B cell (primary cell): ENCODE measurements at regions of chr15 and their contacts with region 1.

Region 1: DNA sequence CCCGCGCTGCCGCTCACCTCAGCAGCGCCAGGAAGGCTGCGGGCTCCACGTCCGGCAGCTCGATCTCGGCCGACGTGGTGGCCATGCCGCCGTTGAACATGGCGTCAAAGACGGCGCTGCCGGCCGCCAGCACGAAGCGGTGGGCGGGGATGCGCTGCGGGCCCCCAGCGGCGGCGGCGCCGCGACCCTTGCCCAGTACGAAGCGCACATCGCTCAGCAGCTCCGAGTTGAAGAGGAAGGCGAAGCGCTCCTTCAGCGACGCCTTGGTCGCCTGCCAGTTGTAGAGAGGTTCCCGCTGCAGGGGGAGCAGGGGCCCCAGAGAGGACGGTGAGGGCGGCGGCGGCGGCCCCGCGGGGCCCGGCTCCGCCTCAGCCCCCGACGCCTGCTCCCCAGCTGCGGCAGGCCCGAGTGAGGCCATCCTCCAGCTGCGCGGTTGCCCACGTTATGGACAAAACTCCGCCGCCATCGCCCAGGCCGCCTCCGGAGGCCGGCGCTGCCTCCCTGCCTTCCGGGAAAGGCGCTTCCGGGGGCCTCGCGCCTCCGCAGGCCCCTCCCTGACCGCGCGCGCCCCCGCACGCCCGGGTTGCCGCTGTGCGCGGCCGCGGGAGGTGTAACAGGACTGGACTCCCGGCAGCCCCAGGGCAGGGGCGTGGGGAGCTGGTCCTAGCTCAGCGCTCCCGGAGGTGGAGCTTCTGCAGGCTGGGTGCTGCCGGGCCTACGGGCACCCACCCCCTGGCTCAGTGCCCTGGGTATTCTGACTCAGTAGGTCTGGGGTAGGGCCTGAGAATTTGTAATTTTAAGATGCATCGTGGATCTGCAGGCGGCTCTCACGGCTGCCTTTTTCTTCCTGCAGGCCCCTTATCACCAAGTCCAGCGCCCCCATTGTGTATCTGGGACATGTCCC is at the start of gene BTBD1:
- DNase-seq: peak; percentile 89
- ATAC-seq: peak; percentile 93
- H3K4me3 ChIP-seq: peak within 1 kb of the TSS; percentile 54 to 87 (median 83)
- H3K4me3 Mint-ChIP-seq: peak within 1 kb of the TSS; percentile 79
- H3K27ac ChIP-seq: peak within 1 kb of the TSS; percentile 31 to 84
- H3K27ac Mint-ChIP-seq: peak within 1 kb of the TSS; percentile 80
- H3K4me1 ChIP-seq: peaks cover 39 to 41% of the 10 kb centered on the region in 2 donors
- H3K4me1 Mint-ChIP-seq: peaks cover 10% of the 10 kb centered on the region
- H3K27me3 ChIP-seq: no peaks in the 10 kb centered on the region
- H3K27me3 Mint-ChIP-seq: no peaks in the 10 kb centered on the region
- CTCF ChIP-seq: no peak
- total RNA-seq, gene BTBD1: 47.5 and 54.6 TPM in 2 replicates

Region 2: DNA sequence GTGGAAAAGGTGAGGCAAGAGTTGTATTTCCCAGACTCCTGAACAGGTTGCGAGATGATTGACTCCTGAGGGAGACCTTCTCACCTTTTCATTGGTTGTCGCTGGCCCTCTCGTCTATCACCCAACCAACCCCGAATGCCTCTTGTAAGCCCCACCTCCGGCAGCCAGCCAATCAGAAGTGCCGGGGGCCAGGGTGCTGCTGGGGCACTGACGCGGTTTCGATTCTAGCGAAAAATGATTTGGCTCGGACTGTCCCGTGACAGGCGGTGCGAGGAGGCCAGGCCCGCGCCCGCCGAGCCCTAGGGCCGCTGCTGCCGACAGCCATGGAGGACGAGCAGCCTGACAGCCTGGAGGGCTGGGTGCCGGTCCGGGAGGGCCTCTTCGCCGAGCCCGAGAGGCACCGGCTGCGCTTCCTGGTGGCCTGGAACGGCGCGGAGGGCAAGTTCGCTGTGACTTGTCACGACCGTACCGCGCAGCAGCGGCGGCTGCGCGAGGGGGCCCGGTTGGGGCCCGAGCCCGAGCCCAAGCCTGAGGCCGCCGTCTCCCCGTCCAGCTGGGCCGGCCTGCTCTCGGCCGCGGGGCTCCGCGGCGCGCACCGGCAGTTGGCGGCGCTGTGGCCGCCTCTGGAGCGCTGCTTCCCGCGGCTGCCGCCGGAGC is 257.5 kb before region 1 on chr15 and contains the start of gene WHAMM:
- CTCF ChIA-PET with region 1: interaction called, 3 read pairs
- POLR2A ChIA-PET with region 1: no interaction called
- intact Hi-C with region 1: loop called (anchors 1 kb)
- DNase-seq: peak; percentile 97
- ATAC-seq: peak; percentile 89
- H3K4me3 ChIP-seq: peak within 1 kb of the TSS; percentile 82 to 96 (median 86)
- H3K4me3 Mint-ChIP-seq: peak within 1 kb of the TSS; percentile 86
- H3K27ac ChIP-seq: peak within 1 kb of the TSS; percentile 91 to 99
- H3K27ac Mint-ChIP-seq: peak within 1 kb of the TSS; percentile 95
- H3K4me1 ChIP-seq: peaks cover 31 to 41% of the 10 kb centered on the region in 2 donors
- H3K4me1 Mint-ChIP-seq: peaks cover 54% of the 10 kb centered on the region
- H3K27me3 ChIP-seq: no peaks in the 10 kb centered on the region
- H3K27me3 Mint-ChIP-seq: no peaks in the 10 kb centered on the region
- CTCF ChIP-seq: no peak
- total RNA-seq, gene WHAMM: 29.9 and 31.3 TPM in 2 replicates

Region 3: DNA sequence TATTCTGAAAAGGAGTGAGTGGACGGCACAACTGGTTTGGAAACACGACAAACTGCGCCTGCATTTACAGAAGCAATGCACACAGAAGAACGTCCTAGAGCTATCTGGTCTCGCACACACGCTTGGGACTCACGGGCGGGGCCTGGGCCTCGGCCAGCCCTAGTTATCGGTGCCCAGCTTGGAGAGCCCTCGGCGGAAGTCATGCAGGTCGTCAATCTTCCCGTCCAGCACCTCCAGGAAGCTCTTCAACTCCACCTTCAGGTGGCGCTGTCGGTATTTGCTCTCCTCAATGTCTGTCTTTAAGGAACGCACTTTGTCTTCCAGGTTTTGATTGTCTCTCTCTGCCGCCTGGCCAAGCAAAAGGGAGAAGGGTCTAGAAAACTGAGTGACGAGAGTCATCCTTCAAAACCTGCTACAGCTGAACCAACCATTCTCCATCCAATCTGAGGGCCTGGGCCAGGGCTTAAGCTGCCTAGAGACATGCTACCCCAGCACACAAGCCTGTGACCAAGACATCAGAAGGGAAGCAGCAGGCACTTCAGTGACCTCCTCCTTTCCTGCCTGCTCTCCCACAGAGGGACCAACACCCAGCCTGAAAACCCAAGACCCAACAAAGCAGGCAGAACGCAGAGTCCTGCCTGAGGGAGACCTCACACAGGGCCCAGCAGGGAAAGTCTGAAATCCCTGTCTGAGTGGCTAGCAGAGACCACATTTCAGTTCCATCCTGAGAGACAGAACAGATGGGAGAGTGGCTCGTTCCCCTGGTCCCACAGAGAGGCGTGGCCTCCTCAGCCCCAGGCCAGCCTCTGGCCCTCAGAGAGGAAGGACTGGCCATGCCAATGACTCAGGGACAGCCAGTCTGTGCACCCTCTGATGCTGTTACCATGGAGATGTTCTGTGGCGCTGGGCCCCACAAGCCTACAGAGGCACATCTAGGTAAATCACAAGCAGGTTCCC is 217.2 kb before region 1 on chr15:
- CTCF ChIA-PET with region 1: no interaction called
- POLR2A ChIA-PET with region 1: interaction called, 3 read pairs
- intact Hi-C with region 1: loop called (anchors 2 kb)
- DNase-seq: peak; percentile 72
- ATAC-seq: peak; percentile 22
- H3K4me3 ChIP-seq: no peak overlapping the region
- H3K4me3 Mint-ChIP-seq: peak overlapping the region; percentile 52
- H3K27ac ChIP-seq: no peak overlapping the region
- H3K27ac Mint-ChIP-seq: peak overlapping the region; percentile 66
- H3K4me1 ChIP-seq: peaks cover 6 to 23% of the 10 kb centered on the region in 2 donors
- H3K4me1 Mint-ChIP-seq: peaks cover 31% of the 10 kb centered on the region
- H3K27me3 ChIP-seq: no peaks in the 10 kb centered on the region
- H3K27me3 Mint-ChIP-seq: no peaks in the 10 kb centered on the region
- CTCF ChIP-seq: peak; percentile 73